Activated CD4-positive, alpha-beta T cell treated with anti-CD3 and anti-CD28 coated beads, Interleukin-2, amount 10 ng/mL, durations not matched to agents 7 days and 5 days (primary cell): ENCODE measurements at regions of chr17 and their contacts with region 1.

Region 1: GRCh38 chr17:47208744-47209488 is at the start of gene MYL4:
- DNase-seq: no peak
- H3K4me3 Mint-ChIP-seq: no peak within 1 kb of the TSS
- H3K27ac Mint-ChIP-seq: no peak within 1 kb of the TSS
- H3K4me1 Mint-ChIP-seq: peaks cover 39% of the 10 kb centered on the region
- H3K27me3 Mint-ChIP-seq: peaks cover 14% of the 10 kb centered on the region
- total RNA-seq, gene MYL4: not detected

Region 2: DNA sequence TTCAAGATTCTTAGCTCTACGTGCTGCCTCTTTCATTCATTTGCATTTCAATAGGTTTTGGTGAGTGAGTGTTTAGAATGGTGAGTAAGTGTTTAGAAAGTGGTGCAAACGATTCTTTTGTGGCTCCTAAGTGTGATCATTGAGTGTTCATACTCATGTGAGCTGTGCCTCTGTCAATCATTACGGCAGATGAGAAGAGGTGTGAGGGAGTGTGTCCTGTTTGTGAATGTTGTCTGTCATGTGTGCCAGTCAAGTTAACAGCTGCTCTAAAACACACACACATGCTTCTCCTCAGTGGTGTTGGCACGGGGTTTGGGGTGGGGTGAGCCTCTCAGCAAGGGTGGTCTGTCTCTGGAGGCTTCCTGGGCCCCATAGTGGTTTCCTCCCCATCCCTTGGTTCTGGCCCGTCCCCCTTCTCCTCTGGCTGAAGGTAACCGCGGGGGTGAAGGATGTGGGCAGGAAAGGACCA is 11.6 kb after region 1 on chr17:
- CTCF ChIA-PET with region 1: interaction called, 30 read pairs
- POLR2A ChIA-PET with region 1: interaction called, 6 read pairs
- DNase-seq: no peak
- H3K4me3 Mint-ChIP-seq: no peak overlapping the region
- H3K27ac Mint-ChIP-seq: peak overlapping the region; percentile 43
- H3K4me1 Mint-ChIP-seq: peaks cover 53% of the 10 kb centered on the region
- H3K27me3 Mint-ChIP-seq: peaks cover 2% of the 10 kb centered on the region

Region 3: DNA sequence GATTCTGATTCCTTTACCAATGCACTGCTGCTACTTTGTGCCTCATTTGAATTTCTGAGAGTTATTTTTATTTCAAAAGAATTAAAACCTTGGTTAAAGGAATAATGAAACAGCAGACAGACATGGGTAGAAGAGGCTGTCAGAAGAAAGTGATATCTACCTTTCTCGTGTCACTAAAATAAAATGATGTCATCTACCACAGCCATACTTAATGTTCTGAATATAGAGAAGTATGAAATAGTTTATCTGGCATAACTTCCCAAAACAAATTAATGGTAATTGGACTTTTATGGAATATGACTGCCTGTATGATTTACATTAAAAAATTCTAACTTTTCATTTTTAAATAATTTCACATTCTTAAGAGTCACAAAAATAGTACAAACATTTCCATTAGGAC is 167.3 kb after region 1 on chr17:
- CTCF ChIA-PET with region 1: no interaction called
- POLR2A ChIA-PET with region 1: no interaction called
- DNase-seq: no peak
- H3K4me3 Mint-ChIP-seq: no peak overlapping the region
- H3K27ac Mint-ChIP-seq: no peak overlapping the region
- H3K4me1 Mint-ChIP-seq: no peaks in the 10 kb centered on the region
- H3K27me3 Mint-ChIP-seq: peaks cover 20% of the 10 kb centered on the region